PC-3 (cell line): ENCODE measurements at regions of chr14 and their contacts with region 1.

Region 1: DNA sequence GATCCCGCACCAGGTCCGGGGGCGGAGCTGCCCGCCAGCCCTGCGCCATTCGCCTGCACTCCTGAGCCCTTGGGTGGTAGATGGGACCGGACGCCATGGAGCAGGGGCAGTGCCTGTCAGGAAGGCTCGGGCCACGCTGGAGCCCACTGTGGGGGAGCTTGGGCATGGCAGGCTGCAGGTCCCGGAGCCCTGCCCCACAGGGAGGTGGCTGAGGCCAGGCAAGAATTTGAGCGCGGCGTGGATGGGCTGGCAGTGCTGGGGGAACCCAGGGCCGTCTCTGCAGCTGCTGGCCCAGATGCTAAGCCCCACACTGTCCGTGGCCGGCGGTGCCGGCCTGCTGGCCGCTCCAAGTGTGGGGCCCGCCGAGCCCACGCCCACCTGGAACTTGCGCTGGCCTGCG is 260.0 kb downstream of the NPAS3 start:
- DNase-seq: no peak
- ATAC-seq: no peak
- H3K4me3 ChIP-seq: no peak overlapping the region
- H3K27ac ChIP-seq: no peak overlapping the region
- H3K4me1 ChIP-seq: peaks cover 26% of the 10 kb centered on the region
- H3K27me3 ChIP-seq: no peaks in the 10 kb centered on the region
- CTCF ChIP-seq: no peak

Region 2: GRCh38 chr14:33010495-33010894 is 188.2 kb before region 1 on chr14:
- CTCF ChIA-PET with region 1: no interaction called
- POLR2A ChIA-PET with region 1: interaction called, 14 read pairs
- intact Hi-C with region 1: no loop called
- DNase-seq: no peak
- ATAC-seq: no peak
- H3K4me3 ChIP-seq: no peak overlapping the region
- H3K27ac ChIP-seq: no peak overlapping the region
- H3K4me1 ChIP-seq: no peaks in the 10 kb centered on the region
- H3K27me3 ChIP-seq: 0 out of 2 replicates have a peak, but pooled peaks cover 4% of the 10 kb centered on the region
- CTCF ChIP-seq: no peak

Region 3: DNA sequence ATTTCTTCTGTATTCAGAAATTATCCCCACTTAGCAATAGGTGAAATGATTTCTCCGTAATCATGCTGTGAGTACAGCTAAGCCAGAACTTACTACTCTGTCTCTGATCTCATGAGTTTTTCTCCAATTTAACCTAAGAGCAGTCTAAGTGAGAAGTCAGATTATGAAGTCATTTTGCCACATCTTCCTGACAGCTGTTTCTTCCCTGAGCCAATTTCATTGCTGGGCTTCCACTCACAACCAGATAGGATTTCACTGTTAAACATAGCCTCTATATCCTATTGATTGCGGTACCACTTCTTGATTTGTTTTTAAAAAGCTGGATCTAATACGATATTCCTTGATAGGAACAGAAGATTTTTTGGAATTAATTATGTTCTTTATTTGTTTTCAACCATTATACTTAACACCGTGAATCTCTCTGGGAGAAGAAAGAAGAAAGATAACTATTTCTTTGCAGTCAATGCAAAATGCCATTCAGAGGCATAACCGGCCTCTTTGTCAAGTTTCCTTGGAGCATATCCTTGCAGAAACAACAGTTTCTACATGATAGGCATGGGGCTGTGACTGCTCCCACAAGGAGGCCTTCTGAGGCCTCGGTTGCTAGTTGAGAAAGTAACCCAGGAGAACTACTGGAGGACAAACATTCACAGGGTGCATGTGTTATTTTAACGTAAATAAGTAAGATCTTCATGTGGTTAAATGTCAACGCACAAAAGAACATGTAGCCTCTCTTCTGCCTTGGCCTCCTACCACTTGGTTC is 47.8 kb before region 1 on chr14:
- CTCF ChIA-PET with region 1: no interaction called
- POLR2A ChIA-PET with region 1: no interaction called
- intact Hi-C with region 1: no loop called
- DNase-seq: no peak
- ATAC-seq: no peak
- H3K4me3 ChIP-seq: no peak overlapping the region
- H3K27ac ChIP-seq: no peak overlapping the region
- H3K4me1 ChIP-seq: no peaks in the 10 kb centered on the region
- H3K27me3 ChIP-seq: 0 out of 2 replicates have a peak, but pooled peaks cover 6% of the 10 kb centered on the region
- CTCF ChIP-seq: no peak